ENCODE measurements at regions of chr1 and their contacts with region 1.

Region 1: GRCh38 chr1:230109895-230110667 is 43.0 kb downstream of the GALNT2 start:
- DNase-seq: peak; percentile 94
- ATAC-seq: peak; percentile 91
- H3K4me3 Mint-ChIP-seq: peak overlapping the region; percentile 48
- H3K27ac Mint-ChIP-seq: peak overlapping the region; percentile 94
- H3K4me1 Mint-ChIP-seq: peaks cover 88% of the 10 kb centered on the region
- H3K27me3 Mint-ChIP-seq: no peaks in the 10 kb centered on the region

Region 2: GRCh38 chr1:230031131-230031530 is 79.0 kb before region 1 on chr1:
- CTCF ChIA-PET with region 1: no interaction called
- POLR2A ChIA-PET with region 1: no interaction called
- intact Hi-C with region 1: loop called in 1 of 2 experiments (anchors 1 kb)
- DNase-seq: peak; percentile 45
- ATAC-seq: peak; percentile 97
- H3K4me3 Mint-ChIP-seq: no peak overlapping the region
- H3K27ac Mint-ChIP-seq: peak overlapping the region; percentile 68
- H3K4me1 Mint-ChIP-seq: peaks cover 20% of the 10 kb centered on the region
- H3K27me3 Mint-ChIP-seq: no peaks in the 10 kb centered on the region

Region 3: GRCh38 chr1:230123280-230124185 is 13.5 kb after region 1 on chr1:
- CTCF ChIA-PET with region 1: interaction called, 7 read pairs
- POLR2A ChIA-PET with region 1: interaction called, 6 read pairs
- intact Hi-C with region 1: loop called (anchors 1 kb)
- DNase-seq: peak; percentile 57
- ATAC-seq: peak; percentile 49
- H3K4me3 Mint-ChIP-seq: no peak overlapping the region
- H3K27ac Mint-ChIP-seq: peak overlapping the region; percentile 53
- H3K4me1 Mint-ChIP-seq: peaks cover 69% of the 10 kb centered on the region
- H3K27me3 Mint-ChIP-seq: no peaks in the 10 kb centered on the region

Measured in activated CD4-positive, alpha-beta T cell treated with anti-CD3 and anti-CD28 coated beads for 36 hours (primary cell).